GM13976 (cell line): ENCODE measurements at regions of chr6 and their contacts with region 1.

Region 1: GRCh38 chr6:70860045-70860444 is 96.8 kb downstream of the B3GAT2 start:
- DNase-seq: no peak
- CTCF ChIP-seq: no peak

Region 2: DNA sequence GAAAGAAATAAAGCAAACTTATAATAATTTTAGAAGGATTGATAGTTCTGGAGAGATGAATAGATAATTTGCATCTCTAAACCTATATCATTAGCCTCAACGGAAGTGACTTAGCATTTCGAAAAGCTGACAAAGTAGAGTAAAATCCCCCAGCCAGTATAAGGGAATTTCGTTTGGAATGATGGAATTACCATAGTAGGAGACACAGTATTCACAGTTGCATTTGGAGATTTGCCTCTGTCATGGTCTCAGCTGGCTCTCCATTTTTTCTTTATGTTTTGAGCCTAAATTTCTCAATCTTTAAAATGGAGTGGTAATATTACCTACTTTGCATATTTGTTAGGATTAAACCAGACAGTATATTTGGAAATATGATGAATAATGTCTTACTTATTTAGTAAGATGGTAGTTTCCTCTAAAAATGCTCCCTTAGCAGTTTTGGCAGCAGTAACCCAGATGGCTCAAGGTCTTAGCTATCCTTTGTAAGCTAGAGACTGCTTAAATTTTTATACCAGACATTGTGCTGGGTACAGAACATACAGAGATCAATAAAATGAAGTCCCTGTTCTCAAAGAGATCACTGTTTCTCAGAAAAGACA is 134.1 kb before region 1 on chr6:
- in situ Hi-C with region 1: loop called (anchors 10 kb)
- DNase-seq: no peak
- CTCF ChIP-seq: no peak

Region 3: GRCh38 chr6:71072508-71072907 is 212.5 kb after region 1 on chr6:
- in situ Hi-C with region 1: no loop called
- DNase-seq: no peak
- CTCF ChIP-seq: no peak